Activated CD8-positive, alpha-beta T cell treated with anti-CD3 and anti-CD28 coated beads, Interleukin-2, amount 10 ng/mL, durations not matched to agents 7 days and 5 days (primary cell): ENCODE measurements at regions of chr10 and their contacts with region 1.

Region 1: DNA sequence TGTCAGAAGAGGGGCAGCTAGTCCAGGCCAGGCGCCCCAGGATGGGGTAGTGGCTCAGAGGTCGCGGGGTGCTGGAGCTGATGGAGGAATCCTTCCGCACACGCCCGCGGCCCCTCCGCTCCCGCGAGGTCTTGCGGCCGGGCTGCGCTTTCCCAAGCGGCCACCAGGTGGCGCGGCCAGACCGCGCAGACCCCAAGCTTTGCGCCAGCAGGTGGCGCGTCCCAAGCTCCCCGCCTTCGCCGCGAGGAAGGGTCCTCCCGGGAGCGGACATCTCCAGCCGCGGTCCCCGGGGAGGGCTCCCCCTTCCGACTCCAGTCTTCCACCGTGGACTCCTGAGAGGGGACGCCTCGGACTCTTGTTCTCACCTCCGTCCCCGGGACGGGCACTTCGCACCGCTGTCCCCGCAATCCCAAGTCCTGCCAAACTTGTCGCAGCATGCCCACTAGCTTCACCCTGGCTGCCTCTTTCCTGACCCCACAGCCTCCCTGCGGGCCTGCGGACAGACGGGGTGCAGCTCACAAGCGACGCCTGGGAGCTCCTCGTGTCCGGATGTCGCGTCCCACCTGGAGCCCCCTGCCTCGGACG is 19.4 kb downstream of the KCNK18 start:
- DNase-seq: peak; percentile 71
- ATAC-seq: peak; percentile 85
- H3K4me3 Mint-ChIP-seq: peak overlapping the region; percentile 73
- H3K27ac Mint-ChIP-seq: no peak overlapping the region
- H3K4me1 Mint-ChIP-seq: peaks cover 12% of the 10 kb centered on the region
- H3K27me3 Mint-ChIP-seq: peaks cover 36% of the 10 kb centered on the region

Region 2: DNA sequence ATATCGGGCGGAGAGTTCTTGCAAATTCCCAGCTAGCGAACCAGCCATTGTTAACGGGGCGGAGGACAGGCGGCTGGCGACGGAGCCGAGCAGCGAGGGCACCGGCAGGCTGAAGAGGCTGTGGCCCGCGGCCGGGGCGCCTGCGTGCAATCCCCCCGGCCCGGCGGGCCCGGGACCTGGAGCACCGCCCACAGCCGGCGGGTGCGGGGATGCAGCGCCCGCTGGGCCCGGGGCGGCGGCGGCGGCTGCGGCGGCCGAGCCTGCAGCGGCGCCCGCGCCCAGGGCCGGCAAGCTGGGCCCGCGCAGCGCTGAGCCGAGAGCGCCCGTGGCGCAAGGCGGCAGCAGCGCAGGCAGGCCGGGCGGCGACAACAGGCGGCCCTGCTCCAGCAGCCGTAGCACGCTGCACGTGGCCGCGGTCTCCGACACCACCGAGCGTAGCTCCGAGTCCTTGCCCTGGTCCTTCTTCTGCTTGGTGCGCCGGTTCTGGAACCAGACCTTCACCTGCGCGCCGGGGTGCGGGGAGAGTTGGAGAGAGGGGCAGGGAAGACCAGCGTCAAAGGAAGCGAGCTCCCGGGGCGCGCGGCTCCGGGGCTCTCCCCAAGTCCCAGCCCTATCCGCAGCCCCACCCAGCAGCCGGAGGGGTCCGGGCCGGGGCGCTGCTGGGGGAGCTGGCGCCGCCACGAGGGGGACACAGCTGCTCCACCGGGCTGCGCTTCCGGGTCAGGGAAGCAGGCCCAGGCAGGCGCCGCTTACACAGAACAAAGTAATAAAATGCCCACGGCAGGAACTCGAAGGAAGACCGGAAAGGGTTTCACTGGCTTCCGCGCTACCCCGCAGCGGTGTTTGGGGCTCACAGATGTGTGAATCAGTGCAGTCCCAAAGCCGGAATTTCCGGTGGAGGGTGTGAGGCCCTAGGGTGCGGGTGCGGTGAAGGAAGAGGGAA is 82.3 kb before region 1 on chr10:
- CTCF ChIA-PET with region 1: no interaction called
- POLR2A ChIA-PET with region 1: no interaction called
- DNase-seq: no peak
- ATAC-seq: no peak
- H3K4me3 Mint-ChIP-seq: peak overlapping the region; percentile 31
- H3K27ac Mint-ChIP-seq: no peak overlapping the region
- H3K4me1 Mint-ChIP-seq: peaks cover 17% of the 10 kb centered on the region
- H3K27me3 Mint-ChIP-seq: peaks cover 81% of the 10 kb centered on the region

Region 3: GRCh38 chr10:117204316-117204715 is 12.4 kb before region 1 on chr10:
- CTCF ChIA-PET with region 1: interaction called, 19 read pairs
- POLR2A ChIA-PET with region 1: no interaction called
- DNase-seq: no peak
- ATAC-seq: no peak
- H3K4me3 Mint-ChIP-seq: no peak overlapping the region
- H3K27ac Mint-ChIP-seq: no peak overlapping the region
- H3K4me1 Mint-ChIP-seq: no peaks in the 10 kb centered on the region
- H3K27me3 Mint-ChIP-seq: peaks cover 2% of the 10 kb centered on the region

Region 4: DNA sequence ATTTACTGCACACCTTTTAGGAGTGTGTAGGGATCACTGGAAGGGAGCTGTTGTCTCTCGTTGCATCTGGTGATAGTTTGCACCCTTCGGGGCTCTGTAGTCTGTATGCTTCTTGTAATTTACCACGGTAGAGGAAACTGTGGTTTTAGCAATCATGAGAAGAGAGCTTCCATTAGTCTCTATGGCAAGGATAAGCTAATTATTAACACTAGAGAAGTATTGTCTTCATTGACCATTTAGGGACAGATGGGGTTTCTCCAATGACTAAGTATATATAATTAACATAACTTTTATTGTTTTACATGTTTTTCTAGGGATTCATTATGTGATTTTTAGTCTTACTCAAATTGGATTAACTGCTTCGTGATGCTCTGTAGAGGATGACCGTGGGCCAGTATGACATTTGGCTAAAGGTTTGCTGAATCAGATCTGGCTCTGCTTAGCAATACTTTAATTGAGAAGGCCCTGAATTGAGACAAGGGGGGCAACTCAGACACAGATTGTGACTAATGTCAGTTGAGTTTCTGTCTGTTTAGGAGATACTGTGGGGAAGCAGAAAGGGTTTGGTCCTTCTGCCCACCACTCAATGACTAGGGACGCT is 32.9 kb after region 1 on chr10:
- CTCF ChIA-PET with region 1: interaction called, 21 read pairs
- POLR2A ChIA-PET with region 1: interaction called, 3 read pairs
- DNase-seq: no peak
- ATAC-seq: no peak
- H3K4me3 Mint-ChIP-seq: no peak overlapping the region
- H3K27ac Mint-ChIP-seq: no peak overlapping the region
- H3K4me1 Mint-ChIP-seq: peaks cover 13% of the 10 kb centered on the region
- H3K27me3 Mint-ChIP-seq: peaks cover 28% of the 10 kb centered on the region

Region 5: GRCh38 chr10:117320050-117320665 is 103.5 kb after region 1 on chr10:
- CTCF ChIA-PET with region 1: interaction called, 145 read pairs
- POLR2A ChIA-PET with region 1: no interaction called
- DNase-seq: no peak
- ATAC-seq: no peak
- H3K4me3 Mint-ChIP-seq: no peak overlapping the region
- H3K27ac Mint-ChIP-seq: no peak overlapping the region
- H3K4me1 Mint-ChIP-seq: no peaks in the 10 kb centered on the region
- H3K27me3 Mint-ChIP-seq: no peaks in the 10 kb centered on the region

Region 6: GRCh38 chr10:117374506-117375359 is 158.0 kb after region 1 on chr10:
- CTCF ChIA-PET with region 1: interaction called, 12 read pairs
- POLR2A ChIA-PET with region 1: interaction called, 4 read pairs
- DNase-seq: peak; percentile 41
- ATAC-seq: peak; percentile 35
- H3K4me3 Mint-ChIP-seq: peak overlapping the region; percentile 87
- H3K27ac Mint-ChIP-seq: peak overlapping the region; percentile 86
- H3K4me1 Mint-ChIP-seq: peaks cover 25% of the 10 kb centered on the region
- H3K27me3 Mint-ChIP-seq: peaks cover 29% of the 10 kb centered on the region